ENCODE measurements at regions of chr4 and their contacts with region 1.

Region 1: GRCh38 chr4:107757864-107758476 is 37.9 kb upstream of the PAPSS1 start:
- DNase-seq: no peak
- H3K4me3 ChIP-seq: no peak overlapping the region
- H3K27ac ChIP-seq: no peak overlapping the region
- H3K4me1 ChIP-seq: no peaks in the 10 kb centered on the region
- H3K27me3 ChIP-seq: no peaks in the 10 kb centered on the region
- CTCF ChIP-seq: peak; percentile 46 to 71 (median 58)
- POLR2A ChIP-seq: no peak

Region 2: GRCh38 chr4:107818301-107818910 is 60.4 kb after region 1 on chr4:
- intact Hi-C with region 1: loop called in 1 of 2 experiments (anchors 10 kb)
- DNase-seq: no peak
- H3K4me3 ChIP-seq: no peak overlapping the region
- H3K27ac ChIP-seq: no peak overlapping the region
- H3K4me1 ChIP-seq: no peaks in the 10 kb centered on the region
- H3K27me3 ChIP-seq: no peaks in the 10 kb centered on the region
- CTCF ChIP-seq: no peak
- POLR2A ChIP-seq: no peak

Region 3: GRCh38 chr4:107902715-107903114 is 144.7 kb after region 1 on chr4:
- intact Hi-C with region 1: loop called in 1 of 2 experiments (anchors 5 kb)
- DNase-seq: no peak
- H3K4me3 ChIP-seq: no peak overlapping the region
- H3K27ac ChIP-seq: no peak overlapping the region
- H3K4me1 ChIP-seq: no peaks in the 10 kb centered on the region
- H3K27me3 ChIP-seq: no peaks in the 10 kb centered on the region
- CTCF ChIP-seq: no peak
- POLR2A ChIP-seq: no peak

Region 4: GRCh38 chr4:107913281-107913899 is 155.4 kb after region 1 on chr4:
- intact Hi-C with region 1: loop called (anchors 2 to 5 kb)
- DNase-seq: peak in 6 of 7 donors; percentile 22 to 57 (median 50)
- H3K4me3 ChIP-seq: no peak overlapping the region
- H3K27ac ChIP-seq: no peak overlapping the region
- H3K4me1 ChIP-seq: no peaks in the 10 kb centered on the region
- H3K27me3 ChIP-seq: no peaks in the 10 kb centered on the region
- CTCF ChIP-seq: peak; percentile 72 to 90 (median 86)
- POLR2A ChIP-seq: no peak

Region 5: DNA sequence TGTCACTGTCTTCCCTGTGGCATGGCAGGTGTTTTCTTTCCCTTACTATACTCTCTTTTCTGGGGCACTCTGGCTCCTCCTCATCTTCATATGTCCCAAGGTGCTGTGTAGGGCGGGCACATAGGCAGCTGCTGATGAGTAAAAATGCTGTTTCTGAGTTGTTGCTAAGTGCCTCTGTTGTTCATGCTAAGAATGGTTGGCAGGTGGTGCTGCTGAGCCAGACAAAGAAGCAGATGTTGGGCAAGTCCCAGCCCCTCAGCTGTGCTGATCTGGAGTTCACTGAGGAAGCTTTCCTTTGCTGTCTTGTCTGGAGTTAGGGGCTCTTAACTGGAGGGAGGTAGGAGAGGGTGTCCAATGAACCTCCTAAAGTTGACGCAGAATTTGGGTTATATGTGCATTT is 272.4 kb after region 1 on chr4:
- intact Hi-C with region 1: no loop called
- DNase-seq: peak; percentile 45 to 80 (median 70)
- H3K4me3 ChIP-seq: no peak overlapping the region
- H3K27ac ChIP-seq: no peak overlapping the region
- H3K4me1 ChIP-seq: no peaks in the 10 kb centered on the region
- H3K27me3 ChIP-seq: no peaks in the 10 kb centered on the region
- CTCF ChIP-seq: peak; percentile 14 to 65 (median 46)
- POLR2A ChIP-seq: no peak